Posterior vena cava (tissue), 2 donors: ENCODE measurements at regions of chr2 and their contacts with region 1.

Region 1: GRCh38 chr2:239472235-239472775 is 71.5 kb upstream of the HDAC4 start:
- DNase-seq: no peak

Region 2: GRCh38 chr2:237662671-237663093 is 1809.6 kb before region 1 on chr2:
- intact Hi-C with region 1: no loop called
- DNase-seq: peak; percentile 95

Region 3: GRCh38 chr2:238728330-238729260 is 743.7 kb before region 1 on chr2:
- intact Hi-C with region 1: no loop called
- DNase-seq: no peak

Region 4: DNA sequence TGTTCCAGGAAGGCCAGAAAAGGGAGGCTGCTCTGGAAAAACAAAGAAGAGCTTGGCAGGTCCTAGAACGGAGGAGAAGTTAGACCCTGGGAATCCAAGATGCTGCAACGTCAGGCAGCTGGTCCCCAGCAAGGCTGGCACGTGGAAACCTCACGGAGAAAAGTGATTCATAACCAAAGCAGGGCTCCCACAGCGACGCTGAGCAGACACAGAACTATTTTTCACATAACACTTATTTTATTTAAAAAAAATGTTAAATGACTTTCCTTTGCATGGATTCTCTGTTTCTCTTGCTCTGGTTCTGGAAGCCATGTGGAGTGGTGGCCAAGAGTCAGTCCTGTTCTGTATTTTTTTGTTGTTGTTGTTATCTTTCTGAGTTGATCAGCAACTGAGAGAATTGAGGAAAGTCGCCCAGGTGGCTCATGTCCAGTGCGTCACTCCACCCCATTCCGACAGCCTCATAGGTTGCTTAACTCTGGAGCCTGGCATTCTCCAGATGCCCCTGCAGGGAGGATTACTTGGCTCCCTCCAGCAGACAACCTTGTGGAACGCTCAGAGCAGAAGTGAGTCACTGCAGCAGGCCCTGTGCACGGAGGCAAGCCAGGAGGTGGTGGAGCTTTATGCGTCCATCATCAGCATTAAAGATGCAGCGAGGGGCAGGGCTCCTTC is 158.4 kb after region 1 on chr2:
- intact Hi-C with region 1: no loop called
- DNase-seq: peak; percentile 81

Region 5: GRCh38 chr2:240725671-240726070 is 1253.4 kb after region 1 on chr2:
- intact Hi-C with region 1: loop called in 1 of 2 experiments (anchors 10 kb)
- DNase-seq: no peak